Caco-2 (cell line): ENCODE measurements at regions of chr7 and their contacts with region 1.

Region 1: GRCh38 chr7:122679813-122680212 is 19.1 kb downstream of the RNF133 start:
- DNase-seq: no peak
- H3K4me3 ChIP-seq: no peak overlapping the region
- H3K4me3 Mint-ChIP-seq: no peak overlapping the region
- H3K27ac Mint-ChIP-seq: peak overlapping the region; percentile 94
- H3K4me1 ChIP-seq: peaks cover 26% of the 10 kb centered on the region
- H3K4me1 Mint-ChIP-seq: peaks cover 17% of the 10 kb centered on the region
- H3K27me3 ChIP-seq: no peaks in the 10 kb centered on the region
- H3K27me3 Mint-ChIP-seq: no peaks in the 10 kb centered on the region
- CTCF ChIP-seq: no peak

Region 2: DNA sequence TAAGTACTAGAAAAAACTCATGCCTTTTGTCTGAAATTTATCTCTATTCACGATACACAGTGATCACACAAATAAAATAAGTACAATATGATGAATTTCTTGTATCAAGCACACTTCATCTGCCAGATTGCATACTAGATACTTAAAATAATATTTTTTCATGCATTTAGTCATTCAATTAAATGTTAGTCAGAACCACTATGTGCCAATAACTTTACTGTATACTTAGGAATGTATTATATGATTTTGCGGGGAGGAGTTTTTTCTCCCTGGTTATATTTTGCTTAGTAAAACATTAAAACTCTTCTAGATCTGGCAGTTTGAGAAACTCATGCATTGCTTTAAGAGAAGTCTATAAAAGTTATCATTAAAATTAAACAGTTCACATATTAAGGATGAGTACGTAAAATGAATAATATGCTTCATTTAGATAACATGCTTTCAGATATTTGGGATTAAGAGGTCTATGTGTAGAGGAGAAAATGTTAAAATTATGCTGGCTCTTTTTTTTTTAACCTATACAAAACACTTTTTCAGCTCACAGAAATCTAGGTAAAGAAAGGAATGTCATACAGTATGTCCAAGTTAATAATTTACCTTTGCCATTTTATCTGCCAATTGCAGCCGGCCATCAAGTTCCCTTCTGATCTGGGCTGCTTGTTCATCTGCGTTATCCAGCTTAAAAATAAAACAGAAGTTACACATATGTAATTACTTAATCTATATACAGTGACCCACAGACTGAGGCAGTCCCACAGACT is 51.0 kb before region 1 on chr7:
- CTCF ChIA-PET with region 1: no interaction called
- POLR2A ChIA-PET with region 1: no interaction called
- intact Hi-C with region 1: loop called (anchors 1 kb)
- DNase-seq: peak in 1 of 2 experiments; percentile 25
- H3K4me3 ChIP-seq: no peak overlapping the region
- H3K4me3 Mint-ChIP-seq: no peak overlapping the region
- H3K27ac Mint-ChIP-seq: no peak overlapping the region
- H3K4me1 ChIP-seq: peaks cover 8% of the 10 kb centered on the region
- H3K4me1 Mint-ChIP-seq: peaks cover 25% of the 10 kb centered on the region
- H3K27me3 ChIP-seq: no peaks in the 10 kb centered on the region
- H3K27me3 Mint-ChIP-seq: no peaks in the 10 kb centered on the region
- CTCF ChIP-seq: no peak

Region 3: GRCh38 chr7:122637784-122638183 is 42.0 kb before region 1 on chr7:
- CTCF ChIA-PET with region 1: no interaction called
- POLR2A ChIA-PET with region 1: no interaction called
- intact Hi-C with region 1: loop called (anchors 2 kb)
- DNase-seq: no peak
- H3K4me3 ChIP-seq: no peak overlapping the region
- H3K4me3 Mint-ChIP-seq: no peak overlapping the region
- H3K27ac Mint-ChIP-seq: no peak overlapping the region
- H3K4me1 ChIP-seq: no peaks in the 10 kb centered on the region
- H3K4me1 Mint-ChIP-seq: no peaks in the 10 kb centered on the region
- H3K27me3 ChIP-seq: no peaks in the 10 kb centered on the region
- H3K27me3 Mint-ChIP-seq: no peaks in the 10 kb centered on the region
- CTCF ChIP-seq: no peak

Region 4: DNA sequence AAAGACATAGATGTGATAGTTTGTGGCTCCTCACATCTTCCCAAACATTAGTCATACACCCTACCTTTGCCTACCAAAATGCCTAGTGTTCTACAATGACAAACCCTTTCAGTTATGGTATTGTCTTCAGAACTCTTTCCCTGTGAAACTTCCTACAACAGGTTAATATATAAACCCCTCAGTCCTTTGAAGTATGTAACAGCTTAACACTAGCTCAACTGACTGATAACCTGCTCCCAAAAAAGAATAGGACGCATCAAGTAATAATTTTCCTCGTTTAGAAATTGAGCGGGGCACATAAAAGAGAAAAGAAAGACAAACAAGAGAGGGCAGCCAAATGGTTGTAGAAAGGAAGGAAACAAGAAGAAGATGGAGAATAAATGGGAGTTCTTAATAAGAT is 72.8 kb after region 1 on chr7:
- CTCF ChIA-PET with region 1: no interaction called
- POLR2A ChIA-PET with region 1: no interaction called
- intact Hi-C with region 1: loop called (anchors 2 kb)
- DNase-seq: peak in 1 of 2 experiments; percentile 28
- H3K4me3 ChIP-seq: no peak overlapping the region
- H3K4me3 Mint-ChIP-seq: peak overlapping the region; percentile 23
- H3K27ac Mint-ChIP-seq: peak overlapping the region; percentile 2
- H3K4me1 ChIP-seq: peaks cover 14% of the 10 kb centered on the region
- H3K4me1 Mint-ChIP-seq: peaks cover 13% of the 10 kb centered on the region
- H3K27me3 ChIP-seq: no peaks in the 10 kb centered on the region
- H3K27me3 Mint-ChIP-seq: no peaks in the 10 kb centered on the region
- CTCF ChIP-seq: no peak

Region 5: DNA sequence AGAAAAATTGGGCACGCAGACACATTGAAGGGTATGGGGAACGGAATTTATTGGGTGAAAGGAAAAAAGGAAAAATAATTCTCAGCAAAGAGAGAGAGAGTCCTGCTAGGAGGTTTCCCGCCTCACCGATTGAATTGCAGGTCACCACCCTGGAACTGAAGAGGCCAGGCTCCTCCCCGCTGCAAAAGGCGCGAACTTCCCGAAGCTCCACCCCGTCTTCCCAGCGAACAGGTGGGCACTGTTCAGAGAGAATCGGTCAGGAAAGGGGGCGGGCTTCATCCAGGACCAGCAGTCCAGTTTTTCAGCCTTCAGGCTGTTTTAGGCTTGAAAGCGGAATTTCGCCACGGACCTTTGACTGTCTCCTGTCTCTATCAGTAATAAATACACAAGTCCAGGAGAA is 233.8 kb after region 1 on chr7:
- CTCF ChIA-PET with region 1: no interaction called
- POLR2A ChIA-PET with region 1: no interaction called
- intact Hi-C with region 1: no loop called
- DNase-seq: no peak
- H3K4me3 ChIP-seq: no peak overlapping the region
- H3K4me3 Mint-ChIP-seq: peak overlapping the region; percentile 3
- H3K27ac Mint-ChIP-seq: no peak overlapping the region
- H3K4me1 ChIP-seq: no peaks in the 10 kb centered on the region
- H3K4me1 Mint-ChIP-seq: no peaks in the 10 kb centered on the region
- H3K27me3 ChIP-seq: no peaks in the 10 kb centered on the region
- H3K27me3 Mint-ChIP-seq: peaks cover 3% of the 10 kb centered on the region
- CTCF ChIP-seq: no peak